ENCODE measurements at regions of chr1 and their contacts with region 1.

Region 1: GRCh38 chr1:41516168-41517061 is 31.9 kb upstream of the EDN2 start:
- DNase-seq: no peak
- ATAC-seq: peak; percentile 96
- H3K4me3 ChIP-seq: no peak overlapping the region
- H3K27ac ChIP-seq: no peak overlapping the region; the same call in 1 of the 2 replicates
- H3K4me1 ChIP-seq: peaks cover 6% of the 10 kb centered on the region; the same call in 1 of the 2 replicates
- H3K27me3 ChIP-seq: no peaks in the 10 kb centered on the region
- CTCF ChIP-seq: peak; percentile 86 to 93 (median 90)
- EP300 ChIP-seq: no peak
- POLR2A ChIP-seq: no peak
- RAD21 ChIP-seq: peak; percentile 71

Region 2: GRCh38 chr1:41496080-41497055 is 20.0 kb before region 1 on chr1:
- CTCF ChIA-PET with region 1: interaction called, 59 read pairs
- POLR2A ChIA-PET with region 1: no interaction called
- RAD21 ChIA-PET with region 1: interaction called, 3 read pairs
- SMC1A ChIA-PET with region 1: interaction called, 7 read pairs
- in situ Hi-C with region 1: no loop called
- intact Hi-C with region 1: no loop called
- DNase-seq: no peak
- ATAC-seq: peak; percentile 61
- H3K4me3 ChIP-seq: peak overlapping the region; percentile 41
- H3K27ac ChIP-seq: no peak overlapping the region
- H3K4me1 ChIP-seq: no peaks in the 10 kb centered on the region; the same call in 1 of the 2 replicates
- H3K27me3 ChIP-seq: peaks cover 0 to 1% of the 10 kb centered on the region in 2 experiments; a peak in 2 of 4 replicates
- CTCF ChIP-seq: no peak
- EP300 ChIP-seq: no peak
- POLR2A ChIP-seq: no peak
- RAD21 ChIP-seq: no peak

Region 3: GRCh38 chr1:41656068-41656467 is 139.7 kb after region 1 on chr1:
- CTCF ChIA-PET with region 1: interaction called, 5 read pairs
- POLR2A ChIA-PET with region 1: no interaction called
- RAD21 ChIA-PET with region 1: interaction called, 3 read pairs
- SMC1A ChIA-PET with region 1: no interaction called
- in situ Hi-C with region 1: no loop called
- intact Hi-C with region 1: loop called (anchors 2 kb)
- DNase-seq: no peak
- ATAC-seq: peak; percentile 42
- H3K4me3 ChIP-seq: no peak overlapping the region
- H3K27ac ChIP-seq: no peak overlapping the region
- H3K4me1 ChIP-seq: peaks cover 16% of the 10 kb centered on the region
- H3K27me3 ChIP-seq: no peaks in the 10 kb centered on the region
- CTCF ChIP-seq: no peak
- EP300 ChIP-seq: no peak
- POLR2A ChIP-seq: no peak
- RAD21 ChIP-seq: no peak

Region 4: GRCh38 chr1:41868599-41868998 is 352.2 kb after region 1 on chr1:
- CTCF ChIA-PET with region 1: interaction called, 3 read pairs
- POLR2A ChIA-PET with region 1: no interaction called
- RAD21 ChIA-PET with region 1: interaction called, 4 read pairs
- SMC1A ChIA-PET with region 1: interaction called, 4 read pairs
- in situ Hi-C with region 1: no loop called
- intact Hi-C with region 1: loop called (anchors 5 kb)
- DNase-seq: peak; percentile 63
- ATAC-seq: peak; percentile 96
- H3K4me3 ChIP-seq: no peak overlapping the region
- H3K27ac ChIP-seq: peak overlapping the region; percentile 27; the same call in 1 of the 2 replicates
- H3K4me1 ChIP-seq: peaks cover 19% of the 10 kb centered on the region
- H3K27me3 ChIP-seq: no peaks in the 10 kb centered on the region
- CTCF ChIP-seq: peak; percentile 60 to 71 (median 66); a peak in 5 of 6 replicates
- EP300 ChIP-seq: no peak
- POLR2A ChIP-seq: no peak
- RAD21 ChIP-seq: peak; percentile 60

Measured in GM12878 (cell line).